ENCODE measurements at regions of chr16 and their contacts with region 1.

Region 1: DNA sequence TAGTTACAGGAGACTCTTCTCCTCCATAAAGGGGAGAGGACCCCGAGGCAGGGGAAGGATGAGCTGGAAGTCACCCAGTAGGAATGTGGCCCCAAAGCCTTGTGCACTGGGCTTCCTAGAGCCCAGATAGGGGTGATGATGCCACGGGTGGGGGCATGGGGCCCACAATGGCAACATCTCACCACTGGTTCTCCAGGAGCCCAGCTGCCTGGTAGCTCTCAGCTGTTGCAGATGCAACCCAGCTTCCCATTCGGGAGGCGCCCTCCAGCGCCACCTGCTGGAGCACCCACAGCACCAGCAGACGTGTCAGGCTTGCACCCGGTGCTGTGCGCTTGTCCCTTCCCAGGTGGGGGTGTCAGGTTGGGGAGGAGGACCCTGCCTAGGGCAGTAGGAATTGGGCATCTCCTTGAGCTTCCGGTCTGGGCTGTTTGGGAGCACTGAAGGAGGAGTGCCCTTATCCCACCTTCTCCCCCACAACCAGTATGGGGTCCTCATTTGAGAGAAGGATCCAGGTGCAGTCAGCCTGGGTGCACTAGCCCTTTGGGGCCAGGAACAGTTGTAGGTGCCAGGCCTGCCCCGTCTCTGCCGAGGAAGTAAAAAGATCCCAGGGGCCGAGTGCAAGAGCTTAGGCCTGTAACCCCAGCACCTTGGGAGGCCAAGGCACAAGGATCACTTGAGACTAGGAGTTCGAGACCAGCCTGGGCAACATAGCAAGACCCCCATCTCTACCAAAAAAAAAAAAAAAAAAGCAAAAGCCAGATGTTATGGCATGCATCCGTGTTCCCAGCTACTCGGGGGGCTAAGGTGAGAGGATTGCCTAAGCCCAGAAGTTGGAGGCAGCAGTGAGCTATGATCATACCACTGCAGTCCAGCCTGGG is 14.4 kb downstream of the CDIPT start:
- DNase-seq: peak; percentile 95
- H3K4me3 Mint-ChIP-seq: no peak overlapping the region
- H3K27ac Mint-ChIP-seq: no peak overlapping the region
- H3K4me1 Mint-ChIP-seq: peaks cover 2% of the 10 kb centered on the region
- H3K27me3 Mint-ChIP-seq: no peaks in the 10 kb centered on the region

Region 2: DNA sequence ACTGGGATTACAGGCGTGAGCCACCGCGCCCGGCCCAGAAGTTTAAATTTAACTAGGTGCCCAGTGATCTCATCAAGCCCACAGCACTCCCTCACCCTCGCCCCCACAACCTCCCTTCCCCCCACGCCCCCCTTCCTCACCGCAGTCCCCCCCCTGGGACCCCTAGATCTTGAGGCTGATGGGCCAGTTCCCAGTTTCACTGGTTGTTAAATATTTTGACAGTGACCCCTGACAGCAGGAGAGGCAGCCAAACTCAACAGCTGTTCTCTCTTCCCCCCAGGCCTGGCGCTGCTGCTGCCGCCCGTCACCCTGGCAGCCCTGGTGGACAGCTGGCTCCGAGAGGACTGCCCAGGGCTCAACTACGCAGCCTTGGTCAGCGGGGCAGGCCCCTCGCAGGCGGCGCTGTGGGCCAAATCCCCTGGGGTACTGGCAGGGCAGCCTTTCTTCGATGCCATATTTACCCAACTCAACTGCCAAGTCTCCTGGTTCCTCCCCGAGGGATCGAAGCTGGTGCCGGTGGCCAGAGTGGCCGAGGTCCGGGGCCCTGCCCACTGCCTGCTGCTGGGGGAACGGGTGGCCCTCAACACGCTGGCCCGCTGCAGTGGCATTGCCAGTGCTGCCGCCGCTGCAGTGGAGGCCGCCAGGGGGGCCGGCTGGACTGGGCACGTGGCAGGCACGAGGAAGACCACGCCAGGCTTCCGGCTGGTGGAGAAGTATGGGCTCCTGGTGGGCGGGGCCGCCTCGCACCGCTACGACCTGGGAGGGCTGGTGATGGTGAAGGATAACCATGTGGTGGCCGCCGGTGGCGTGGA is 154.1 kb before region 1 on chr16:
- intact Hi-C with region 1: loop called (anchors 1 kb)
- DNase-seq: no peak
- H3K4me3 Mint-ChIP-seq: no peak overlapping the region
- H3K27ac Mint-ChIP-seq: no peak overlapping the region
- H3K4me1 Mint-ChIP-seq: peaks cover 9% of the 10 kb centered on the region
- H3K27me3 Mint-ChIP-seq: no peaks in the 10 kb centered on the region

Region 3: DNA sequence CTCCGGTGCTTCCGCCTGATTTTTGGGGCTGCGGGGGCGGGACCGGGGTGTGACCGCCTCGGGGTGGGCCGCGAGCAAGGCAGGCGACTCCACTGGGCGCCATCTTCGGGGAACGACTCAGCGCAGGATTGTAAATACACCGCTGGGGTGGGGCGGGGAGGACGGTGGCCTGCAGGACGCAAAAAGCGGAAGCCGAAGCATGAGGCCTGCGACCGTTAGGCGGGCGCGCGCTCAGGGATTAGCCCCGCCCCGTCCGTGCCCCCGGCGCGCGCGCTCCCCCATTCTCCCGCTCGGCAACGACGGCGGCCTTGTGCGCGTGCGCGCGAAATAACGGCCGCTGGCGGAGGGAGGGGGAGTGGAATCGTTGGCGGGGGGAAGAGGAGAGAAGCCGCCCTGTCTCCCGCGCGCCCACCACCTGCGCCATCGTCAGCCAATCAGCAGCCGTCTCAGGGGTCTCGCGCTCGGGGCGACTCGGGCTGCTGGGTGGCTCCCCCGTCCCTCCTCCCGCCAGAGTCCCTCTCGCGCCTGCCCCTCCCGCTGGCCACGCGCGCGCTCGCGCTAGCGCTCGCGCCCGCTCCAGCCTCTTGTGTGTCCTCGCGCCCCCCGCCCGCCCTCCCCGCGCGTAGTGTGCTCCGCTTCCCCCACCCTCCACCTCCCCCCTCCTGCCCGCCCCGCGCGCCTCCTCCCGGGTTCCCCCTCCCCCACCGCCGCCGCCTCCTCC is 43.1 kb before region 1 on chr16:
- intact Hi-C with region 1: loop called (anchors 2 kb)
- DNase-seq: peak; percentile 99
- H3K4me3 Mint-ChIP-seq: peak overlapping the region; percentile 96
- H3K27ac Mint-ChIP-seq: peak overlapping the region; percentile 99
- H3K4me1 Mint-ChIP-seq: peaks cover 42% of the 10 kb centered on the region
- H3K27me3 Mint-ChIP-seq: no peaks in the 10 kb centered on the region

Region 4: GRCh38 chr16:29862884-29863668 is 14.4 kb after region 1 on chr16 and contains the start of gene CDIPT:
- intact Hi-C with region 1: no loop called
- DNase-seq: peak; percentile 98
- H3K4me3 Mint-ChIP-seq: peak within 1 kb of the TSS; percentile 96
- H3K27ac Mint-ChIP-seq: peak within 1 kb of the TSS; percentile 98
- H3K4me1 Mint-ChIP-seq: peaks cover 25% of the 10 kb centered on the region
- H3K27me3 Mint-ChIP-seq: no peaks in the 10 kb centered on the region
- total RNA-seq, gene CDIPT: 69.2 and 71.2 TPM in 2 replicates

Region 5: GRCh38 chr16:29909391-29909790 is 60.7 kb after region 1 on chr16:
- intact Hi-C with region 1: no loop called
- DNase-seq: no peak
- H3K4me3 Mint-ChIP-seq: no peak overlapping the region
- H3K27ac Mint-ChIP-seq: no peak overlapping the region
- H3K4me1 Mint-ChIP-seq: no peaks in the 10 kb centered on the region
- H3K27me3 Mint-ChIP-seq: no peaks in the 10 kb centered on the region

Measured in activated CD4-positive, alpha-beta T cell treated with anti-CD3 and anti-CD28 coated beads, Interleukin-2, amount 10 ng/mL, durations not matched to agents 24 days and 14 days (primary cell).